ENCODE measurements at regions of chr3 and their contacts with region 1.

Region 1: GRCh38 chr3:176872771-176873209 is 324.5 kb downstream of the TBL1XR1 start:
- DNase-seq: peak; percentile 38
- ATAC-seq: peak; percentile 94
- H3K4me3 ChIP-seq: no peak overlapping the region
- H3K27ac ChIP-seq: no peak overlapping the region
- H3K4me1 ChIP-seq: no peaks in the 10 kb centered on the region
- H3K27me3 ChIP-seq: no peaks in the 10 kb centered on the region
- CTCF ChIP-seq: peak; percentile 90
- EP300 ChIP-seq: no peak
- POLR2A ChIP-seq: no peak
- RAD21 ChIP-seq: peak; percentile 53; the same call in 1 of the 2 replicates

Region 2: GRCh38 chr3:176939022-176939817 is 66.4 kb after region 1 on chr3:
- CTCF ChIA-PET with region 1: interaction called, 53 read pairs
- POLR2A ChIA-PET with region 1: no interaction called
- in situ Hi-C with region 1: loop called (anchors 5 kb)
- intact Hi-C with region 1: loop called (anchors 1 kb)
- DNase-seq: peak; percentile 67
- ATAC-seq: peak; percentile 94
- H3K4me3 ChIP-seq: no peak overlapping the region
- H3K27ac ChIP-seq: no peak overlapping the region
- H3K4me1 ChIP-seq: no peaks in the 10 kb centered on the region
- H3K27me3 ChIP-seq: no peaks in the 10 kb centered on the region; a peak in 1 of 5 replicates
- CTCF ChIP-seq: peak; percentile 85
- EP300 ChIP-seq: no peak
- POLR2A ChIP-seq: no peak
- RAD21 ChIP-seq: peak; percentile 70

Region 3: GRCh38 chr3:178385280-178385952 is 1512.6 kb after region 1 on chr3:
- CTCF ChIA-PET with region 1: no interaction called
- POLR2A ChIA-PET with region 1: no interaction called
- in situ Hi-C with region 1: no loop called
- intact Hi-C with region 1: loop called (anchors 1 kb)
- DNase-seq: peak; percentile 1
- ATAC-seq: peak; percentile 57; the same call in 2 of the 3 replicates
- H3K4me3 ChIP-seq: no peak overlapping the region
- H3K27ac ChIP-seq: no peak overlapping the region
- H3K4me1 ChIP-seq: peaks cover 11% of the 10 kb centered on the region
- H3K27me3 ChIP-seq: no peaks in the 10 kb centered on the region
- CTCF ChIP-seq: peak; percentile 65
- EP300 ChIP-seq: no peak
- POLR2A ChIP-seq: no peak
- RAD21 ChIP-seq: peak; percentile 35; the same call in 1 of the 2 replicates